Dorsolateral prefrontal cortex (tissue), 120 donors: ENCODE measurements at regions of chr18 and their contacts with region 1.

Region 1: DNA sequence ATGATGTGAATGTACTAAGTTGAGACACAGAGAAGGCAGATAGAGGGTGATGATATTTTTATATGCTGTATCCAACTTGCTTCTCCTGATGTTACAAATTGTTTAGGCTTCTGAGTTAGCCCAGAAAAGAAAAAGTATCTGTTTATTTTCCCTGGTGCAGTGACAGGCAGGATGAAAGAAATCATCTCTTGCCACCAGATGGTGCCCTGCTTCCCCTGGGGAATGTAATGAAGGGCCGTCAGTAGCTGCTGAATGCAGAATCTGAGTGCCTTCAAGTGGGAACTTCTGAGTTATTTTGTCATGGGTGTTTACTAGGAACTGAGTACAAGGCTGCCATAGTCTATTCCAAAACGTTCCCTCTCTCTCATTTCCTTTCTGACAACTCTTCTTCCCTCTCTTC is 525.6 kb downstream of the MBD2 start:
- DNase-seq: peak in 8 of 10 donors; percentile 6 to 59 (median 43)
- H3K4me3 ChIP-seq: no peak overlapping the region
- H3K27ac ChIP-seq: no peak overlapping the region
- H3K27me3 ChIP-seq: no peaks in the 10 kb centered on the region
- CTCF ChIP-seq: peak; percentile 36 to 74 (median 61)

Region 2: DNA sequence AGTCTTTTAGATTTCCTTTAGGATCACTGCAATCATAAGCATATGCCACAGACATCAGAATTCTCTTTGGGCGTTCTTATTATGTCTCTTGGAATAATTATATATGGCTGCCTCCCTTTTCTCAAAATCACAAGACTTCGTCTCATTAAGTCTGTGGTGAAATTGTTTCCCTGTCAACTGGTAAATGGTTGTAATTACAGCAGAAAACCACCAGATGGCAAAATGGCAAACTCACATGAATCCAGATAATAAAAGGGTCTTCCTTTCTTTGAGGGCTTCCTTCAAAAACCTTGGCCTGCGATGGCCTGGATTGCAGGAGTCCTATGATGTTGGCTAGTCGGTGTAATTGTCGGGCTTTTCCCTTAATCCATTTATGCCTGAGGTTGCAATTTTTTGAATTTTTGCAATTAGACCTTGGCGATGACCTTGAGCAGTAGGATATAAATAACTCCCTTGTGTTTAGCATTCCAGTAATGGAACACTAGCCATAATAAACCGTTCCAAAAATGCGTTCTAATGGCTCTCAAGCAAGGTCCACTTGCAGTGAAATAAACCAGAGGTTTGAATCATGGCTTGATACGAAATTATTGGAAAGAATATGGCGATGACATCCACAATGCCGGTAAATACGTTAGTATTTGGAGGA is 130.9 kb before region 1 on chr18:
- intact Hi-C with region 1: loop called in 1 of 2 experiments (anchors 10 kb)
- DNase-seq: no peak
- H3K4me3 ChIP-seq: no peak overlapping the region
- H3K27ac ChIP-seq: no peak overlapping the region
- H3K27me3 ChIP-seq: no peaks in the 10 kb centered on the region
- CTCF ChIP-seq: peak; percentile 36 to 76 (median 64)